Cardiac septum (tissue), 1 donor: ENCODE measurements at regions of chr17 and their contacts with region 1.

Region 1: GRCh38 chr17:34637548-34638525 is 58.5 kb downstream of the TMEM132E start:
- DNase-seq: peak; percentile 85

Region 2: DNA sequence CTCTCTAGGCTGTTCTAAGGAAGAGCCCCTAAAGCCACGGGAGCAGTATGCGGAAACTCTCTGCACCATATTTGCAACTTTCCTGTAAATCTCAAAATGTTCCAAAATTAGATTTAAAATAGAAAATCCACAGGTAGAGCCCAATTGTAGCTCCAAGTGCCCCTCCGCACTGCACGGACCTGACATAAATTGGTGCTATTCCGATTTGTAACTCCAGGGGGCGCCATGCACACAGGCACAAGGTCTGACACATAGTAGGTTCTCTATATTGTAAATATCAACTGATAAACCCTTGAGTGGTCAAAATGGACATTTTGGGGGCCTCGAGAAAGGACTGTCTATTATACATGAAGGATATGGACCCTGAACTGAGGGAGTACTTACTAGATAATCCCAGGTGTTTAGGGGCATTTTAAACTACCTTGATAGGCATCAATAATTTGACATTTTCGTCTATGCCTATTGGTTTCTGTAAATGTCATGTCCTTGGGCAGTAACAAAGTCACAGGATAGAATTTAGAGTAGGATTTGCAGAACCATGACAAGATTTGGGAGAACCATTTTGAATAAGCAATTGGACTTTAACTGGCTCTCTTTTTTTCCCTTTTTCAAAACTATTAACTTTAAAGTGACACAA is 95.0 kb before region 1 on chr17:
- intact Hi-C with region 1: loop called (anchors 5 kb)
- DNase-seq: no peak

Region 3: DNA sequence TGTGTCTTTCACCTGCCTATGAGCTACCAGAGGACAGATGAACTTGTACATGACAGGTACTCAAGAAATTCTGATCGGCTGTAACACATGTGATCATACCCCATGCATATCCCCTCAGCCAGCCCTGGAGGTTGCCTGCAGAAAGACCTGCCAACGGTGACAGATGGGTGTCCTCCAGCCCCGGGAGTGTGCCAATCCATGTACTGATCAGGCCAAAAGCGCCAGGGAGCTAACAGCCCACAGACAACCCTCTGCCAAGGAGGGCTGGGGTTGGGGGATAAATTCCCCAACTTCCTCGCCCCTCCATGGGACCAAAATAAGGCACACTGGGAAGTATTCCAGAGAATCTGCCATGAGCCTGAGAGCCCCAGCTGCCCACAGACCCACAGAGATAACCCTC is 134.1 kb after region 1 on chr17:
- intact Hi-C with region 1: no loop called
- DNase-seq: no peak